ENCODE measurements at regions of chr20 and their contacts with region 1.

Region 1: DNA sequence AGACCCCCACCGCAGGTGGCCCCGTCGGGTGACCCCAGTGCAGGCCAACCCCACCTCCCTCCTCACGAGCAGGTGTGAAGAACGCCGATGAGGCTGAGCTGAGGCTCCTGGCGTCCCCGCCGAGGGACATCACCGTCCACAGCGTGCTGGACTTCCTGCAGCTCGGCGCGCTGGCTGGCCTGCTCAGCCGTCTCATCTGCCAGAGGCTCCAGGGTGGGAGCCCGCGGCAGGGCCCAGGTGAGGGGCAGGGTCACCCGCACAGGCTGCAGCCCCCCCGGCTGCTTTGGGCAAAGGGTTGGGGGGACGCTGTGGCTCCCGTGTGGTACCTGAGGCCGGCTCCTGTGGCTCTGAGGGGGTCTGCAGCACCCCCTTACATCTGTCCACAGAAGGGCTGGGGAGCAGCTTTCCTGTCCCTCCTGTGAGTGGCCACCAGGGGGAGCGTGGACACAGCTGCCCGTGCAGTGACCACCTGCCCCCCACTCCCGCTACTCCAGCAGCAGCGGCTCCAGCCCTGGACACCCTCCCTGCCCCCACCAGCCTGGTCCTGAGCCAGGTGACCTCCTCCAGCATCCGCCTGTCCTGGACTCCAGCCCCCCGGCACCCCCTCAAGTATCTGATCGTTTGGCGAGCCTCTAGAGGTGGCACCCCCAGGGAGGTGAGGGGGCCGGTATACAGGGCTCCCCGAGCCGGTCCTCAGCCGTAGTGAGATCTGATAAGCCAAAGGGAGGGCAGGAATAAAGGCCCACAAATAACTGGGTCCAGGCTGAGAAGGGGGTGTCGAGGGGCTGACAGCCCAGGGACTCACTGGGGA is 16.5 kb downstream of the COL20A1 start:
- DNase-seq: no peak
- H3K4me3 ChIP-seq: no peak overlapping the region
- H3K27ac ChIP-seq: no peak overlapping the region
- H3K4me1 ChIP-seq: no peaks in the 10 kb centered on the region
- H3K27me3 ChIP-seq: peaks cover 7% of the 10 kb centered on the region
- CTCF ChIP-seq: peak; percentile 68

Region 2: GRCh38 chr20:63381807-63382322 is 72.4 kb after region 1 on chr20:
- intact Hi-C with region 1: loop called (anchors 2 kb)
- DNase-seq: no peak
- H3K4me3 ChIP-seq: no peak overlapping the region
- H3K27ac ChIP-seq: no peak overlapping the region
- H3K4me1 ChIP-seq: no peaks in the 10 kb centered on the region
- H3K27me3 ChIP-seq: no peaks in the 10 kb centered on the region
- CTCF ChIP-seq: peak; percentile 92

Region 3: DNA sequence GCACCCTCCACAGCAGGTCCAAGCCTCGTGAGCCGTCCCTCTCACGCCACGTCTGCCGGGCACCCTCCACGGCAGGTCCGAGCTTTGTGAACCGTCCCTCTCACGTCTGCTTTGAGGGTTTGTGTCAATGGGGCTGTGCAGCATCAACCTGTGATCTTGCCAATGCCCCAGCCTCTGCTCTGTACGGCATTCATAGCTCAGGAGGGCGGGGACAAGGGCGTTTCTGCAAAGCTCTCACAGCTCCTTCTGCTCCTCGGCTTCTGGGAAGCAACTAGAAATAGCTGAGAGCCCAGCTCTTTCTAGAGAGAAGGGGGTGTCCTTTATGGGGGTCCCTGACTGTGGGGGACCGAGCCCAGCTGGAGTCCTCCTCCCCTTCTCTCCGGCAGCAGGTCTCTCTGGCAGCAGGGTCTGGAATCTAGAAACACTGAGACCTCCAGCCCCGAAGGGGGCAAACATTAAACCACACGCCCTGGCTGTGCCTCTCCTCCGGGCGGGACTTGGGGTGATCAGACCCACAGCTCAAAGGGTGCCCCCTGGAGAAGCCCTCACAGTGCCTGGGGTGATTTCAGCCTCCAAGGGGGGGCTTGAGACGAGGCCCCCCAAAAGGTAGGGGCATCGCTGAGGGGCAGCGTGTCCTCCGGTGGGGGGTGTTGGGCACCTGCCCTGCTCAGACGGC is 92.9 kb after region 1 on chr20:
- intact Hi-C with region 1: no loop called
- DNase-seq: no peak
- H3K4me3 ChIP-seq: no peak overlapping the region
- H3K27ac ChIP-seq: no peak overlapping the region
- H3K4me1 ChIP-seq: no peaks in the 10 kb centered on the region
- H3K27me3 ChIP-seq: no peaks in the 10 kb centered on the region
- CTCF ChIP-seq: no peak

Measured in colonic mucosa (tissue), 4 donors.